ENCODE measurements at regions of chr2 and their contacts with region 1.

Region 1: GRCh38 chr2:74147727-74148456 is at the start of gene BOLA3:
- DNase-seq: peak; percentile 86
- ATAC-seq: peak; percentile 97
- H3K4me3 Mint-ChIP-seq: no peak within 1 kb of the TSS
- H3K27ac Mint-ChIP-seq: no peak within 1 kb of the TSS
- H3K4me1 Mint-ChIP-seq: peaks cover 7% of the 10 kb centered on the region
- H3K27me3 Mint-ChIP-seq: no peaks in the 10 kb centered on the region
- CTCF ChIP-seq: no peak
- total RNA-seq, gene BOLA3: 18.8 and 19.1 TPM in 2 replicates

Region 2: DNA sequence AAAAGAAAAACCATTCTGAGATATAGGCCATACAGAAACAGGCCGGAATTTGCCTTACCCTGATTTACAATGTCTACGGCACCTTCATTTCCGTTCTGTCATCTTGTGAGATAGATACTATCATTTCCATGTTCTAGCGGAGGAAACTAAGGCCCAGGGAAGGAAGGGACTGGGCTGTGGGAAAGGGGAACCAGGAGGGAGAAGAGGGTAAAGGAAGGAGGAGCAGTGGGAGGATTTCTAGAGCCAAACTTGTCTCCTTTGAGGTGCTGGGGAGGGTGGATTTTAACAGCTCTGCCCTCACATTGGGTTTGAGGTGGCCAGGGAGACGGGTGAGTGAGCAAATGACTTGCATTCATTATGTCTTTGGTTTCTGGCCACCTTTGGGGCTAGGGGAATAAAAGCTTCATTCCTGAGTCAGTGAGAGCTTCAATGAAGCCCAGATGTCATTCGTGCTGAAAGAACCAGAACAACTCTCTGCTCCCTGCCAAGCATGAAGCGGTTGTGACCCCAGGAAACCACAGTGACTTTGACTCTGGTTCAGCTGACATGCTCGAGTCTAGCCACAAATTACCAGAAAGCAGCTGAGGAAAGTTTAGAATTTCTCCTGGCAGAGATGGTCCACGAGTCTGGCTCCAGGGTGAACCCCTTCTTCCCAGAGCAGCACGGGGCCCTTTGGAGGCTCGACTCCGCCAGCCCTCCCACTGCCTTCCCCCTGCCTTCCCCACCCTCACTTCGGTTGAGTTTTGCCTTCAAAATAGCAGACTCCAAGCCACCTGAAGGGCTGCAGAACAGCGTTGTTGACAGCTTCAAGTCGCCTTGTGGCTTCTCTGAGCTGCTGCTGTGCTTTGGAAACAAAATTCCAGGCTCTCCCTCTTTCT is 251.3 kb before region 1 on chr2:
- CTCF ChIA-PET with region 1: no interaction called
- POLR2A ChIA-PET with region 1: no interaction called
- intact Hi-C with region 1: no loop called
- DNase-seq: no peak
- ATAC-seq: peak; percentile 72
- H3K4me3 Mint-ChIP-seq: no peak overlapping the region
- H3K27ac Mint-ChIP-seq: no peak overlapping the region
- H3K4me1 Mint-ChIP-seq: peaks cover 6% of the 10 kb centered on the region
- H3K27me3 Mint-ChIP-seq: peaks cover 4% of the 10 kb centered on the region
- CTCF ChIP-seq: no peak

Region 3: GRCh38 chr2:74119912-74120825 is 27.7 kb before region 1 on chr2:
- CTCF ChIA-PET with region 1: interaction called, 12 read pairs
- POLR2A ChIA-PET with region 1: interaction called, 7 read pairs
- intact Hi-C with region 1: loop called (anchors 1 kb)
- DNase-seq: peak; percentile 86
- ATAC-seq: peak; percentile 95
- H3K4me3 Mint-ChIP-seq: peak overlapping the region; percentile 89
- H3K27ac Mint-ChIP-seq: peak overlapping the region; percentile 94
- H3K4me1 Mint-ChIP-seq: peaks cover 6% of the 10 kb centered on the region
- H3K27me3 Mint-ChIP-seq: peaks cover 4% of the 10 kb centered on the region
- CTCF ChIP-seq: no peak

Region 4: GRCh38 chr2:74206180-74206688 is 58.3 kb after region 1 on chr2:
- CTCF ChIA-PET with region 1: interaction called, 10 read pairs
- POLR2A ChIA-PET with region 1: interaction called, 10 read pairs
- intact Hi-C with region 1: no loop called
- DNase-seq: no peak
- ATAC-seq: peak; percentile 69
- H3K4me3 Mint-ChIP-seq: peak overlapping the region; percentile 59
- H3K27ac Mint-ChIP-seq: peak overlapping the region; percentile 83
- H3K4me1 Mint-ChIP-seq: peaks cover 41% of the 10 kb centered on the region
- H3K27me3 Mint-ChIP-seq: no peaks in the 10 kb centered on the region
- CTCF ChIP-seq: no peak

Region 5: GRCh38 chr2:74334931-74335333 is 187.0 kb after region 1 on chr2:
- CTCF ChIA-PET with region 1: interaction called, 7 read pairs
- POLR2A ChIA-PET with region 1: no interaction called
- intact Hi-C with region 1: loop called (anchors 1 kb)
- DNase-seq: peak; percentile 62
- ATAC-seq: peak; percentile 66
- H3K4me3 Mint-ChIP-seq: no peak overlapping the region
- H3K27ac Mint-ChIP-seq: no peak overlapping the region
- H3K4me1 Mint-ChIP-seq: no peaks in the 10 kb centered on the region
- H3K27me3 Mint-ChIP-seq: no peaks in the 10 kb centered on the region
- CTCF ChIP-seq: peak; percentile 96

Measured in activated B cell treated with CpG ODN at 0.5 μM for 24 hours (primary cell).